K562 (cell line): ENCODE measurements at regions of chr4 and their contacts with region 1.

Region 1: GRCh38 chr4:55736605-55737183 is 82.9 kb upstream of the EXOC1L start:
- DNase-seq: peak in 2 of 4 experiments; percentile 25 to 41
- ATAC-seq: peak; percentile 27; the same call in 2 of the 3 replicates
- H3K4me3 ChIP-seq: no peak overlapping the region
- H3K27ac ChIP-seq: no peak overlapping the region
- H3K4me1 ChIP-seq: peaks cover 15 to 24% of the 10 kb centered on the region in 2 experiments; a peak in 4 of 5 replicates
- H3K27me3 ChIP-seq: no peaks in the 10 kb centered on the region
- CTCF ChIP-seq: peak; percentile 22 to 76 (median 35); a peak in 3 of 6 replicates
- EP300 ChIP-seq: no peak
- POLR2A ChIP-seq: no peak
- RAD21 ChIP-seq: peak; percentile 86

Region 2: GRCh38 chr4:54971474-54971950 is 765.2 kb before region 1 on chr4:
- CTCF ChIA-PET with region 1: interaction called, 7 read pairs
- POLR2A ChIA-PET with region 1: no interaction called
- in situ Hi-C with region 1: no loop called
- intact Hi-C with region 1: loop called (anchors 5 kb)
- DNase-seq: peak; percentile 37 to 51 (median 47)
- ATAC-seq: peak; percentile 91
- H3K4me3 ChIP-seq: no peak overlapping the region
- H3K27ac ChIP-seq: no peak overlapping the region
- H3K4me1 ChIP-seq: no peaks in the 10 kb centered on the region
- H3K27me3 ChIP-seq: no peaks in the 10 kb centered on the region
- CTCF ChIP-seq: peak; percentile 67 to 80 (median 72)
- EP300 ChIP-seq: no peak
- POLR2A ChIP-seq: no peak
- RAD21 ChIP-seq: peak; percentile 73 to 76

Region 3: GRCh38 chr4:55184600-55185523 is 551.8 kb before region 1 on chr4:
- CTCF ChIA-PET with region 1: no interaction called
- POLR2A ChIA-PET with region 1: no interaction called
- in situ Hi-C with region 1: loop called (anchors 10 kb)
- intact Hi-C with region 1: loop called (anchors 1 kb)
- DNase-seq: peak; percentile 31 to 62 (median 38)
- ATAC-seq: peak; percentile 93
- H3K4me3 ChIP-seq: no peak overlapping the region
- H3K27ac ChIP-seq: no peak overlapping the region
- H3K4me1 ChIP-seq: no peaks in the 10 kb centered on the region
- H3K27me3 ChIP-seq: no peaks in the 10 kb centered on the region; a peak in 1 of 5 replicates
- CTCF ChIP-seq: peak; percentile 57 to 77 (median 66)
- EP300 ChIP-seq: no peak
- POLR2A ChIP-seq: no peak
- RAD21 ChIP-seq: peak; percentile 61

Region 4: GRCh38 chr4:55345980-55346850 is 390.5 kb before region 1 on chr4 and contains the start of gene SRD5A3:
- CTCF ChIA-PET with region 1: interaction called, 8 read pairs
- POLR2A ChIA-PET with region 1: interaction called, 4 read pairs
- in situ Hi-C with region 1: no loop called
- intact Hi-C with region 1: loop called (anchors 5 kb)
- DNase-seq: peak; percentile 89 to 93 (median 90)
- ATAC-seq: peak; percentile 94
- H3K4me3 ChIP-seq: peak within 1 kb of the TSS; percentile 62
- H3K27ac ChIP-seq: peak within 1 kb of the TSS; percentile 96
- H3K4me1 ChIP-seq: peaks cover 12 to 15% of the 10 kb centered on the region in 2 experiments
- H3K27me3 ChIP-seq: no peaks in the 10 kb centered on the region
- CTCF ChIP-seq: peak; percentile 81 to 91 (median 83)
- EP300 ChIP-seq: no peak; the same call in 1 of the 2 replicates
- POLR2A ChIP-seq: peak; percentile 88
- RAD21 ChIP-seq: peak; percentile 71 to 73
- polyA plus RNA-seq, gene SRD5A3: 2.5 to 5.3 TPM

Region 5: DNA sequence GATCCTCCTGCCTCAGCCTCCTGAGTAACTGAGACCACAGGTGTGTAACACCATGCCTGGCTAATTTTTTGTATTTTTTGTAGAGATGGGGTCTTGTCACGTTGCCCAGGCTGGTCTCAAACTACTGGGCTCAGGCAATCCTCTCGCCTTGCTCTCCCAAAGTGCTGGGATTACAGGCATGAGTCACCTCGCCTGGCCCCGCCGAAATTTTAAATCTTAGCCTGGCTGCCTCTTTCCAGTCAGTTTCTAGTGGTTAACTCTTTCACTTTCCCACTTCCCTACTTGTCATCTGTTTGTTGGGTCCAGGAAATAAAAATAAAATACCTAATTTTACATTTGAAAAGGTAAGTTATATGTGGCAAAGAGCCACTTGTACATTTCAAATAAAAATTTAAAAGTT is 278.5 kb before region 1 on chr4:
- CTCF ChIA-PET with region 1: no interaction called
- POLR2A ChIA-PET with region 1: no interaction called
- in situ Hi-C with region 1: loop called (anchors 10 kb)
- intact Hi-C with region 1: no loop called
- DNase-seq: no peak
- ATAC-seq: no peak
- H3K4me3 ChIP-seq: no peak overlapping the region
- H3K27ac ChIP-seq: no peak overlapping the region
- H3K4me1 ChIP-seq: no peaks in the 10 kb centered on the region
- H3K27me3 ChIP-seq: no peaks in the 10 kb centered on the region
- CTCF ChIP-seq: no peak
- EP300 ChIP-seq: no peak
- POLR2A ChIP-seq: no peak
- RAD21 ChIP-seq: no peak

Region 6: DNA sequence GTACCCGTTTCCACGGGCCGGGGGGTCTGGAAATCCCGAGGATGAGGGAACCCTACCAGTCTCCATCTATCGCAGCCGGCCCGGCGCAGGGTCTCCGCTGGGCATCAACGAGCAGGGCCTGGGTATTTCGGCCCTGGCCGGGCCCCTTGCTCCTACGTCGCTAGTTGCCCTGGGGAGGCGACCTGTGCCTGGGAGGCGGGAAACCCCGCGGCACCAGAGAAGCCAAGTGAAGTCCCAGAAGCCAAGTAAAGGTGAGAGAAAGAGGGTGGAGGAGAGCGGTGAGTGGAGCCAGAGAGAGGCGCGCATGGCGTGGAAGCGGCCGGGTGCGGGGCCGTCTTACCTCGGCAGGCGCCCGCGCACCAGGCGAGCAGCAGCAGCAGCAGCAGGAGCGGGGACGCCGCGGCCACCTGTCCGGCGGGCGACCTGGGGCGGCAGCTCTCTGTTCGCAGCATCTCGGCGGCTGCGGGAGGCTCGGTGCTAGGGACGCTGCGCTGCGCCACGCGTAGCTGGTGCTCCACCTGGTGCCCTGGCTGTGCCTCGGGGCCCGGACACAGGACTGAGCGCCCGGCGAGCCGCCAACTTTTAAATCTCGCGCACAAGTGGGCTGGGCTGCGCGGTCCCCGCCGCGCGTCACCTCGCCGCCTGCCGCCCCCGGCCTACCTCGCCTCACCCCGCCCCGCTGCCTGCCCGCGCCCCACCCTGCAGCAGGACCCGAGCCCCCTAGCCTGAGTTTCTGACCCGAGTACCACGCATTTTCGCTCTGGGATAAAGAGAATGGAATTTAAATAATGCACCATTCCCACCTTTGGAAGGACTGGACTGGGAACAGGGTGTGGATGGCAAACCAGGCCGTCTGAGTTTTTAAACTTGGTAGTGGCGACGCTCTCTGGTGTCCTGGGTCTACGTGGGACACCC is 100.7 kb before region 1 on chr4 and contains the start of gene NMU:
- CTCF ChIA-PET with region 1: interaction called, 4 read pairs
- POLR2A ChIA-PET with region 1: interaction called, 8 read pairs
- in situ Hi-C with region 1: loop called (anchors 5 kb)
- intact Hi-C with region 1: no loop called
- DNase-seq: peak; percentile 63 to 89 (median 72)
- ATAC-seq: peak; percentile 80
- H3K4me3 ChIP-seq: peak within 1 kb of the TSS; percentile 90
- H3K27ac ChIP-seq: peak within 1 kb of the TSS; percentile 96
- H3K4me1 ChIP-seq: peaks cover 12 to 20% of the 10 kb centered on the region in 2 experiments
- H3K27me3 ChIP-seq: no peaks in the 10 kb centered on the region
- CTCF ChIP-seq: peak in 2 of 3 experiments; percentile 48 to 56; a peak in 3 of 6 replicates
- EP300 ChIP-seq: no peak
- POLR2A ChIP-seq: peak; percentile 76
- RAD21 ChIP-seq: peak; percentile 17 to 43; a peak in 3 of 4 replicates
- polyA plus RNA-seq, gene NMU: 73.8 to 122 TPM

Region 7: GRCh38 chr4:56261027-56261426 is 524.3 kb after region 1 on chr4:
- CTCF ChIA-PET with region 1: no interaction called
- POLR2A ChIA-PET with region 1: no interaction called
- in situ Hi-C with region 1: no loop called
- intact Hi-C with region 1: no loop called
- DNase-seq: no peak
- ATAC-seq: no peak
- H3K4me3 ChIP-seq: no peak overlapping the region
- H3K27ac ChIP-seq: no peak overlapping the region
- H3K4me1 ChIP-seq: no peaks in the 10 kb centered on the region
- H3K27me3 ChIP-seq: peaks cover 0 to 10% of the 10 kb centered on the region in 2 experiments; a peak in 1 of 5 replicates
- CTCF ChIP-seq: no peak
- EP300 ChIP-seq: no peak
- POLR2A ChIP-seq: no peak
- RAD21 ChIP-seq: no peak